Breast epithelium (tissue), 4 donors: ENCODE measurements at regions of chr4 and their contacts with region 1.

Region 1: DNA sequence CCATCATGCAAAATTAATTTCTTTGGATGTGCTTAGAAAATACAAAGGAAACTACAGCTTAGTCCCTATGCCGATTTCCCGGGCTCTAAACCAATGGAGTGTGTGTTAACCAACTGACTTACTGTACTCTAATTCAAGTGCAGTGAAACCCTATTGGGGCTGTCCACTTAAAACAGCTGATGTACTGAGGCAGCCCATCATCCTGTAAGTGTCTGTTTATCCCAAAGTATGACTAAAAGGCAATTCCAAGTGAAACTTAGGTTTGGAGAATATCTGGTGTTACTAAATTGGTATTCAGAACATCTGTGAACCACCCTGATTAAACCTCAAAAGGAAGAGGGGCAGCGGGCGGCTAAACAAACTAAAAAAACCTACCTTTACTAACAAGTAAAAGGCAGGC is 79.7 kb downstream of the GATB start:
- DNase-seq: no peak
- H3K4me3 ChIP-seq: no peak overlapping the region
- H3K27ac ChIP-seq: no peak overlapping the region
- H3K4me1 ChIP-seq: no peaks in the 10 kb centered on the region
- H3K27me3 ChIP-seq: no peaks in the 10 kb centered on the region
- CTCF ChIP-seq: no peak
- POLR2A ChIP-seq: no peak

Region 2: DNA sequence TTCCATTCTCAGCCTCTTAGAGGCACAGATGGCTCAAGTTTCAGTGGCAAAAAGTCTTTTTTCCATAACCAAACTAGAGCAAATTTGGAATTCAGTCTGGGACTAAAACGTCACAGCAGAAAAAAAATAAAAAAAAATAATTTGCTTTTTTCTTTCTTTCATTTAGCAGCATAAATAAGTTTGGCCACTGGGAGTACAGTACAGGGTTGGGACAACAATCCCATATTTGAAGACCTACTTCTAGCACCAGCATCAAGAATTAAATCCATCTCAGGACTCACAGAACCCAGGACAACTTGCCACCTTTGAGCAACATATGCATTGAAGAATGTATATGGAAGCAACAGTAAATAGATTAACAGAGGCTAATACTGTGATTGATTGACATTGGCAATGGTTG is 640.8 kb after region 1 on chr4:
- intact Hi-C with region 1: loop called (anchors 5 kb)
- DNase-seq: no peak
- H3K4me3 ChIP-seq: no peak overlapping the region
- H3K27ac ChIP-seq: no peak overlapping the region
- H3K4me1 ChIP-seq: no peaks in the 10 kb centered on the region
- H3K27me3 ChIP-seq: no peaks in the 10 kb centered on the region
- CTCF ChIP-seq: no peak
- POLR2A ChIP-seq: no peak

Region 3: DNA sequence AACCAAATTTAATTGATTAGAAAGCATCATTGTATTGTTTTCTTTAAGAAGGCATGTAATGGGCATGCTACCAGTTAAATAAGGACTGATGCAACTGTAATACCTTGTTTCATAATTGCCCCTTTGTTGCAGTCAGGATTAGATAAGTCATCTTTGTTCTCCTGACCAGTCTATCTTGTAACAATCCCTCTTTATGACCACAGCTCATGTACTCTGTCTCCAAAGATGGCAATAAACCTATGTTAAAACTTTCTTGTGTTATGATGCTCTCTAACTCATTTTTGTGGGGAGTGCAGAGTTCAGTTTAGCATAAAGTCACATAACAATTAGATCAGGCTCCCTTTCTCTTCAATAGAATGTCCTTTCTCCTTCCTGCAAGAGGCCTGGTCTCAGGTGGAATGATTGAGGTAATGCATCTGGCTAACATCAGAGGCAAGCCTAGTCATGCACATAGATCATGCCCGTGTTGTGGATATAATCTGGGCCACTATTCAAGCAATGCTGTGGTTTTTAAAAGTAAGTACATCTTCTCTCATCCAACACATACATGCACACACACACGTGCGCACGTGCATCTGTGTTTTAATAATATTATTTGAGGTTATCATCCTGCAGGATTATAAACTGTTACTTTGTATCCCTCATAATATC is 953.1 kb after region 1 on chr4:
- intact Hi-C with region 1: loop called (anchors 5 kb)
- DNase-seq: peak in 1 of 2 donors; percentile 33
- H3K4me3 ChIP-seq: no peak overlapping the region
- H3K27ac ChIP-seq: peak overlapping the region; percentile 12 to 48
- H3K4me1 ChIP-seq: peaks cover 2 to 4% of the 10 kb centered on the region in 2 donors
- H3K27me3 ChIP-seq: no peaks in the 10 kb centered on the region
- CTCF ChIP-seq: no peak
- POLR2A ChIP-seq: no peak